Psoas muscle (tissue), 8 donors: ENCODE measurements at regions of chr9 and their contacts with region 1.

Region 1: GRCh38 chr9:72952914-72953313 is at the start of gene ALDH1A1:
- DNase-seq: no peak
- ATAC-seq: peak in 2 of 4 donors; percentile 25 to 36
- H3K4me3 ChIP-seq: peak within 1 kb of the TSS; percentile 55
- H3K27ac ChIP-seq: peak within 1 kb of the TSS; percentile 71
- H3K4me1 ChIP-seq: peaks cover 16% of the 10 kb centered on the region
- H3K27me3 ChIP-seq: no peaks in the 10 kb centered on the region
- CTCF ChIP-seq: no peak
- total RNA-seq, gene ALDH1A1: 14.1 to 57.0 (median 31.7) TPM

Region 2: DNA sequence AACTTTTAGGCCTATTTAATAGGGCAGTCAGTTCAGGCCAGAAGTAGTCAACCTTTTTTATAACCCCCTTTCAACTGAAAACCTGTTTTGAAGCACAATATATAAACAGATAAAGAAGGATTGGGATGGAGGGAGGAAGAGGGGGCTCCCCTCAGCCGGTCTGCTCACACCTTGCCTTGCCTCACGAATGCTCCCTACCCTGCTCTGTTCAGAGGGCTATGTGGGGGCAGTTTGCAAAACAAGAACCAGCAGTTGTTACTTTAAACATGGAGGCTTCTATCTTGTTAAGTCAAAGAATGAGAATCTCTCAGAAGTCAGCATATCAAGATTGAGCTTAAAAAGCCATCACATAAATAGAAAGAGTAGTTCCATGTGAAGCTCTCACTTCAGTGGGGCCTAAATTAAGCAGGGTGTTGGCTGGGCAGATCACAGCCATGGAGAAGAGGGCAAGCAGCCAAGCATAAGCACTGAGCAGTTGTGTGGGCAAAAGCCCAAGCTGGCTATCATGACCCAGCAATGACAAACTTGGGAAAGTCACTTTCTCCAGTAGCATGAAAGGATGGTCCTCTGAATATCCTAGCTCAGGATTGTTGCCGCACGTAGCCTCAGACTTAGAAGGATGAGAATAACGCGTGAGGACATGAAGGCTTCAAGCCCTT is 70.7 kb before region 1 on chr9:
- intact Hi-C with region 1: loop called in 1 of 2 experiments (anchors 5 kb)
- DNase-seq: peak; percentile 23 to 76
- ATAC-seq: peak; percentile 65 to 99 (median 96)
- H3K4me3 ChIP-seq: no peak overlapping the region
- H3K27ac ChIP-seq: peak overlapping the region; percentile 46
- H3K4me1 ChIP-seq: peaks cover 9% of the 10 kb centered on the region
- H3K27me3 ChIP-seq: no peaks in the 10 kb centered on the region
- CTCF ChIP-seq: no peak

Region 3: DNA sequence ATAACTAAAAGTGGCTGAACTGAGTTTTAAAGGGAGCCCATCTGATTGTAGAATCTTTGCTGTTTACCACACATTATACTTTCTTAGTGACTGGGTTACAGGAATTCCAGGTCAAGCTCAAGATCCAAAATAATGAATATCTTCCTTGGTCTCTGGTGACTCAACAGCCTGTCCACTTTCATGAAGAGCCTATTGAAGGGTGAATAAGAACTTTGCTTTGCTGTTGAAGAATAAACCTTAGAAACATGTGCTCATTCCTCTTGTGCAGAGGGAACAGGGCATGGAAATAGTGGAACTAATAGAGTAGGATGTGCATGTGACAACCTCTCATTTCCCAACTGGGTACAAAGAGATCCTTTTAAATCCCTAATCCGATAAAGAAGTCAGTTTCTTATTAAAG is 21.5 kb before region 1 on chr9:
- intact Hi-C with region 1: no loop called
- DNase-seq: no peak
- ATAC-seq: no peak
- H3K4me3 ChIP-seq: no peak overlapping the region
- H3K27ac ChIP-seq: no peak overlapping the region
- H3K4me1 ChIP-seq: no peaks in the 10 kb centered on the region
- H3K27me3 ChIP-seq: no peaks in the 10 kb centered on the region
- CTCF ChIP-seq: no peak